Naive thymus-derived CD4-positive, alpha-beta T cell (primary cell): ENCODE measurements at regions of chr11 and their contacts with region 1.

Region 1: GRCh38 chr11:32792948-32793475 is 1.4 kb downstream of the CCDC73 start:
- DNase-seq: peak; percentile 30 to 60 (median 49)
- ATAC-seq: peak; percentile 82
- H3K4me3 ChIP-seq: peak overlapping the region; percentile 38
- H3K4me3 Mint-ChIP-seq: peak overlapping the region in 7 of 10 donors; percentile 48 to 80 (median 56)
- H3K27ac ChIP-seq: no peak overlapping the region
- H3K27ac Mint-ChIP-seq: peak overlapping the region in 1 of 9 donors; percentile 59
- H3K4me1 ChIP-seq: no peaks in the 10 kb centered on the region
- H3K4me1 Mint-ChIP-seq: peaks cover 0 to 8% (median 5%) of the 10 kb centered on the region in 7 donors
- H3K27me3 ChIP-seq: no peaks in the 10 kb centered on the region
- H3K27me3 Mint-ChIP-seq: peaks cover 4 to 31% (median 9%) of the 10 kb centered on the region in 5 donors

Region 2: DNA sequence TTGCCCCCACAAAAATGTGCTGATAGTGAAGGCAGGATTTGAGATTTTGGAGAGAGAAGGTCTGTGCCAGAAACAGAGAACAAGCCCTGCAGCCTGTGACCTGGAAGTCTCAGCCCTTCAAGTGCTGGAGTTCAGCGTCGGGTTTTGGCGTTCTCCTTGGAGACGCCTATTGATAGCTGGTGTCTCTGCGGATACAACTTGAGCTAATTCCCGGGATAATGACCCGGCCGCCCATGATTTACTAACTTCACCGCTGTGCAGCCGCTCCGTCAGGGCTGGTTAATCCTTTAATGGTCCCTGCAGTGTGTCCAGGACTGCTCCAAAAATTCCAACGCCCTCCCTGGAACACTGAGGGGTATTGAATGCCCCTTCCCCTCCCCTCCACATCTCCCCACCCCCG is 434.3 kb before region 1 on chr11:
- CTCF ChIA-PET with region 1: no interaction called
- POLR2A ChIA-PET with region 1: no interaction called
- intact Hi-C with region 1: loop called in 1 of 2 experiments (anchors 2 kb)
- DNase-seq: no peak
- ATAC-seq: no peak
- H3K4me3 ChIP-seq: no peak overlapping the region
- H3K4me3 Mint-ChIP-seq: no peak overlapping the region
- H3K27ac ChIP-seq: no peak overlapping the region
- H3K27ac Mint-ChIP-seq: no peak overlapping the region
- H3K4me1 ChIP-seq: no peaks in the 10 kb centered on the region
- H3K4me1 Mint-ChIP-seq: no peaks in the 10 kb centered on the region
- H3K27me3 ChIP-seq: no peaks in the 10 kb centered on the region
- H3K27me3 Mint-ChIP-seq: peaks cover 7 to 47% (median 18%) of the 10 kb centered on the region in 5 donors

Region 3: DNA sequence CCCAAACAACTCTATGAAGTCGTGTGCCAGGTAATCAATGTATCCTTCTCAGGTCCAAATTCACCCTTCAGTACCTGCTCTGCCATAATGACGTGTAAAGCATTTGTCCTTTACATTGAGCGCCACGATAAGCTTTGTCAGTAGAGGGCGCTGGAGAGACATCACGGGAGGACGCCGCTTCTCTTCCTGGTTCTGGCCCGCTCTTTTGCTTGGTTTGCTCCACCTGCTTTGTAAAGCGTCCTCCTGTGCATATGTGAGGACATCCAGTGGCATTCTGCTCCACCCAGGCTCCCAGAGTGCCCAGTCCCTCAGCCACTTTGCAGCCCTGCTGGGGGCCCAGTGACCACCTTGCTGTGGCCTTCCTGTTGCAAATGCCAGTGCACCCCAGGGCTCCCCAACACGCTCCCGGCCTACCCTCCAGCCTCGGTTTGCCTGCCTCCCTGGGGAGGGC is 418.7 kb before region 1 on chr11:
- CTCF ChIA-PET with region 1: no interaction called
- POLR2A ChIA-PET with region 1: no interaction called
- intact Hi-C with region 1: loop called in 1 of 2 experiments (anchors 2 kb)
- DNase-seq: peak in 1 of 9 donors; percentile 22
- ATAC-seq: peak; percentile 57
- H3K4me3 ChIP-seq: no peak overlapping the region
- H3K4me3 Mint-ChIP-seq: no peak overlapping the region
- H3K27ac ChIP-seq: no peak overlapping the region
- H3K27ac Mint-ChIP-seq: no peak overlapping the region
- H3K4me1 ChIP-seq: no peaks in the 10 kb centered on the region
- H3K4me1 Mint-ChIP-seq: peaks cover 0 to 3% (median 0%) of the 10 kb centered on the region in 7 donors
- H3K27me3 ChIP-seq: no peaks in the 10 kb centered on the region
- H3K27me3 Mint-ChIP-seq: peaks cover 0 to 26% (median 10%) of the 10 kb centered on the region in 5 donors

Region 4: GRCh38 chr11:32510039-32510438 is 283.0 kb before region 1 on chr11:
- CTCF ChIA-PET with region 1: no interaction called
- POLR2A ChIA-PET with region 1: no interaction called
- intact Hi-C with region 1: no loop called
- DNase-seq: no peak
- ATAC-seq: no peak
- H3K4me3 ChIP-seq: no peak overlapping the region
- H3K4me3 Mint-ChIP-seq: no peak overlapping the region
- H3K27ac ChIP-seq: no peak overlapping the region
- H3K27ac Mint-ChIP-seq: no peak overlapping the region
- H3K4me1 ChIP-seq: no peaks in the 10 kb centered on the region
- H3K4me1 Mint-ChIP-seq: peaks cover 0 to 6% (median 0%) of the 10 kb centered on the region in 7 donors
- H3K27me3 ChIP-seq: no peaks in the 10 kb centered on the region
- H3K27me3 Mint-ChIP-seq: peaks cover 0 to 37% (median 26%) of the 10 kb centered on the region in 5 donors

Region 5: DNA sequence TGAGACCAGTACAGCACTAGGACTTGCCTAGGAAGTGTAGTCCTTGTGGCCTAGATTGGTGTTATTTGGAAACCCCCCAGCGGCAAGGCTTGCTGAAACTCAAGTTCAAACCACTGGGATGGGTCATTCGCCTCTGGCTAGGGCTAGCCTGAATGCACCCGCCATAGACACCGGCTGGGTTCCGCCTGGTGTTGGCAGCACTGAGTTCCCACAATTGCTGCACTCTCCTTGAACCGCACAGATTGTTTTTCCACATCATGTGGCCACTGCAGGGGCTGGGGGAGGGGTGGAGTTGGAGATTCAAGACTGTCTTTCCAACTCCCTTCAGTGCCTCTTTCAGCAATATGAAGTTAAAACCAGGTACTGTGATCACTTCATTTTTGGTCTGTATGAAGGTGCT is 41.6 kb before region 1 on chr11:
- CTCF ChIA-PET with region 1: no interaction called
- POLR2A ChIA-PET with region 1: no interaction called
- intact Hi-C with region 1: loop called in 1 of 2 experiments (anchors 2 kb)
- DNase-seq: no peak
- ATAC-seq: no peak
- H3K4me3 ChIP-seq: no peak overlapping the region
- H3K4me3 Mint-ChIP-seq: no peak overlapping the region
- H3K27ac ChIP-seq: no peak overlapping the region
- H3K27ac Mint-ChIP-seq: no peak overlapping the region
- H3K4me1 ChIP-seq: no peaks in the 10 kb centered on the region
- H3K4me1 Mint-ChIP-seq: no peaks in the 10 kb centered on the region
- H3K27me3 ChIP-seq: no peaks in the 10 kb centered on the region
- H3K27me3 Mint-ChIP-seq: peaks cover 0 to 34% (median 24%) of the 10 kb centered on the region in 5 donors